Mammary epithelial cell (primary cell): ENCODE measurements at regions of chr9 and their contacts with region 1.

Region 1: DNA sequence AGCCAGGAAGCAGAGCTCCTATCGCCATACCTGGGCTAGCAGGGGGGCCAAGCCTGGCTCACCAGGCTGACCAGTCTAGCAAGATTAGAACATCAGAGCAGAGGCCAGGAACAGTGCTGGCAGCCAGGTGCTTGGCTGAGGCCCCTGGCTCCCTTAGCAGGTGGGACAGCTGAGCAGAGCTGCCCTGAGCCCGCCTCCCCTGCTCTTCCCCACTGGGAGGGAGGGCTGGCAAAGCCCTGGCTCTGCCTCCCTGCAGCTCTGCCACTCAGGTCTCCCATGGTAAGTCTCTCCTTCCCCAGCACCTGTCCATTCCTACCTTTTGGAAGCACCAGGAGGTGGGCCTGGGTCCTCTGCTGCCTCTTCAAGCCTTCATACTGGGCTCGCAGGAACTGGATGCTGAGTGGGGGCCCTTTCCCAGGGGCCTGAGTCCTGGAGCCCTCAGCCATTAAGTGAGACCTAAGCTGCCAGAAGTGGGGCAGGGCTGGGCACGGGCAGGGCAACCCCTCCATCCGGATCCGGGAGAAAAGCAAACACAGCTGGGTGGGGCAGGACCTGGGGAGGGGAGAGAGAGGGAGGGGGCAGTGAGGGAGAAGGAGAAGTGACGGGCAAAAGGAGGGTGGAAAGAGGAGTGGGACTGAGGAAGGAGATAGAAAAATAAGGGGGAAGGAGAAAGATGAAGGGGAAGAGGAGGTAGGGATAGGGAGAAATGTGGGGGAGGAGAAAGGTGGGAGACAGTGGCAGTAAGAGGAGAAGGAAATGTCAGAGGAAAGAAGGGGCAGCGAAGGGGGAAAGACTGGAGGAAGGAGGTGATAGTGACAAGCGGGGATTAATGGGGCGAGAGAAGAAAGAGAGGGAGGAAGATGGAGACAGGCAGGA is 650 bp downstream of the C9orf152 start:
- DNase-seq: no peak
- H3K4me3 ChIP-seq: no peak overlapping the region
- H3K27ac ChIP-seq: no peak overlapping the region
- H3K4me1 ChIP-seq: no peaks in the 10 kb centered on the region
- H3K27me3 ChIP-seq: peaks cover 3% of the 10 kb centered on the region
- CTCF ChIP-seq: no peak

Region 2: GRCh38 chr9:109426626-109427402 is 780.5 kb before region 1 on chr9:
- CTCF ChIA-PET with region 1: no interaction called
- dilution Hi-C with region 1: no loop called
- in situ Hi-C with region 1: no loop called
- intact Hi-C with region 1: no loop called
- DNase-seq: no peak
- H3K4me3 ChIP-seq: no peak overlapping the region
- H3K27ac ChIP-seq: no peak overlapping the region
- H3K4me1 ChIP-seq: no peaks in the 10 kb centered on the region
- H3K27me3 ChIP-seq: no peaks in the 10 kb centered on the region
- CTCF ChIP-seq: no peak

Region 3: GRCh38 chr9:110320651-110321445 is 113.5 kb after region 1 on chr9:
- CTCF ChIA-PET with region 1: interaction called, 10 read pairs
- dilution Hi-C with region 1: no loop called
- in situ Hi-C with region 1: no loop called
- intact Hi-C with region 1: no loop called
- DNase-seq: no peak
- H3K4me3 ChIP-seq: no peak overlapping the region
- H3K27ac ChIP-seq: no peak overlapping the region
- H3K4me1 ChIP-seq: peaks cover 13% of the 10 kb centered on the region
- H3K27me3 ChIP-seq: no peaks in the 10 kb centered on the region
- CTCF ChIP-seq: no peak